ENCODE measurements at regions of chr1 and their contacts with region 1.

Region 1: GRCh38 chr1:70205434-70206118 is at the start of gene LRRC40:
- DNase-seq: peak; percentile 98
- ATAC-seq: peak; percentile 98 to 100 (median 100)
- H3K4me3 ChIP-seq: peak within 1 kb of the TSS; percentile 97
- H3K27ac ChIP-seq: peak within 1 kb of the TSS; percentile 88
- H3K4me1 ChIP-seq: peaks cover 54% of the 10 kb centered on the region
- H3K27me3 ChIP-seq: no peaks in the 10 kb centered on the region
- CTCF ChIP-seq: no peak
- total RNA-seq, gene LRRC40: 5.5 to 8.7 (median 7.3) TPM

Region 2: GRCh38 chr1:70164350-70164749 is 41.2 kb before region 1 on chr1:
- intact Hi-C with region 1: no loop called
- DNase-seq: no peak
- ATAC-seq: no peak
- H3K4me3 ChIP-seq: no peak overlapping the region
- H3K27ac ChIP-seq: no peak overlapping the region
- H3K4me1 ChIP-seq: no peaks in the 10 kb centered on the region
- H3K27me3 ChIP-seq: no peaks in the 10 kb centered on the region
- CTCF ChIP-seq: no peak

Region 3: DNA sequence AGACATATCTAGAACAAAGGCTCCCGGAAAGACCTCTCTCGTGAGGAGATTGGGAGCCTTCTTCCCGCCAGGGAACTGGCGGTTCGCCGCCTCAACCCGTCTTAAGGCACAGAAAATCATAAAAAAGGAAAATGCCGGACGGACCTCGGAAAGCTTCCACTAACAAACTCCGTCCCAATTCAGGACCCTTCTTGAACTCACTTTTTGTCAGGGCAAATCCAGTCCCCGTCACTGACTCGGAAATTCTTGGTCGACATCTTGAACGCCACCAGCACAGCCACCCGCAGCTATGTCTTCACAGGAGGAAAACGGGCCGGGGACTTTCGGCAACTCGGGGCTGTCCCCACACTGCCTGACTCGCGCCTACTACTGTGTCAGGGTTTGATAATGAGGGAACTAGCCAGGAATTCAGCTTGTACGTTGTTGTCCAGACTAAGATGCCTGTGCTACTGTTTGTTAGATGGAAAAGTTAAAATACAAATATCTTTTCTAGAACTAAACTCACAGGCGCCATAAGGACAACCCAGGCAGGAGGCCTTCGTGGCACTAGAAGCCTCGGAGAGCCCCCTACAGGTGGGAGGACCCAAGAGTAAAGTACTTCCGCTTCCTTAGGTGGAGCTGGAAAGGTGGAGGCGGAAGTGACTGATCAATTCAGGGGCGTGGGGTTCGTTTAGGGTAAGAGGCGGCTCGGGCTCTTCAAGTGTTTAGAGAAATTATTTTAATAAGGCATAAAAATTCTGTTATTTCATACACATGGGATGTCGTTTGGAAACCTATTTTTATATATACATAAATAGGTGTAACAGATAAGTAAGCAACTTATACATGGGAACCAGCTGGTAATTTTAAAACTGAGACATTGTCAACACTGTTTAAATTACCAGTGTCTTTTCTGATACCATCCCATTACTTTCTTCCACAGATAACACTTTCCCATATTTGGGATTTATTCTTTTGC is 875.4 kb after region 1 on chr1 and contains the start of gene ZRANB2:
- intact Hi-C with region 1: loop called in 1 of 2 experiments (anchors 1 kb)
- DNase-seq: peak; percentile 90 to 94
- ATAC-seq: peak; percentile 97 to 99 (median 98)
- H3K4me3 ChIP-seq: peak within 1 kb of the TSS; percentile 81
- H3K27ac ChIP-seq: peak within 1 kb of the TSS; percentile 90
- H3K4me1 ChIP-seq: peaks cover 16% of the 10 kb centered on the region
- H3K27me3 ChIP-seq: peaks cover 0 to 15% (median 4%) of the 10 kb centered on the region in 3 donors
- CTCF ChIP-seq: peak; percentile 75
- total RNA-seq, gene ZRANB2: 30.6 to 56.7 (median 44.3) TPM

Measured in psoas muscle (tissue), 8 donors.